ENCODE measurements at regions of chr2 and their contacts with region 1.

Region 1: GRCh38 chr2:163599548-163599947 is 136.3 kb downstream of the FIGN start:
- DNase-seq: no peak
- H3K4me3 ChIP-seq: no peak overlapping the region
- H3K27ac ChIP-seq: no peak overlapping the region
- H3K4me1 ChIP-seq: no peaks in the 10 kb centered on the region
- H3K27me3 ChIP-seq: no peaks in the 10 kb centered on the region
- CTCF ChIP-seq: no peak

Region 2: GRCh38 chr2:163515836-163516235 is 83.7 kb before region 1 on chr2:
- CTCF ChIA-PET with region 1: no interaction called
- dilution Hi-C with region 1: no loop called
- in situ Hi-C with region 1: no loop called
- intact Hi-C with region 1: no loop called
- DNase-seq: no peak
- H3K4me3 ChIP-seq: no peak overlapping the region
- H3K27ac ChIP-seq: no peak overlapping the region
- H3K4me1 ChIP-seq: no peaks in the 10 kb centered on the region
- H3K27me3 ChIP-seq: no peaks in the 10 kb centered on the region
- CTCF ChIP-seq: no peak

Region 3: GRCh38 chr2:163934131-163934530 is 334.6 kb after region 1 on chr2:
- CTCF ChIA-PET with region 1: interaction called, 11 read pairs
- dilution Hi-C with region 1: no loop called
- in situ Hi-C with region 1: no loop called
- intact Hi-C with region 1: no loop called
- DNase-seq: peak; percentile 61
- H3K4me3 ChIP-seq: no peak overlapping the region
- H3K27ac ChIP-seq: no peak overlapping the region
- H3K4me1 ChIP-seq: peaks cover 10% of the 10 kb centered on the region
- H3K27me3 ChIP-seq: no peaks in the 10 kb centered on the region
- CTCF ChIP-seq: no peak